ENCODE measurements at regions of chr15 and their contacts with region 1.

Region 1: DNA sequence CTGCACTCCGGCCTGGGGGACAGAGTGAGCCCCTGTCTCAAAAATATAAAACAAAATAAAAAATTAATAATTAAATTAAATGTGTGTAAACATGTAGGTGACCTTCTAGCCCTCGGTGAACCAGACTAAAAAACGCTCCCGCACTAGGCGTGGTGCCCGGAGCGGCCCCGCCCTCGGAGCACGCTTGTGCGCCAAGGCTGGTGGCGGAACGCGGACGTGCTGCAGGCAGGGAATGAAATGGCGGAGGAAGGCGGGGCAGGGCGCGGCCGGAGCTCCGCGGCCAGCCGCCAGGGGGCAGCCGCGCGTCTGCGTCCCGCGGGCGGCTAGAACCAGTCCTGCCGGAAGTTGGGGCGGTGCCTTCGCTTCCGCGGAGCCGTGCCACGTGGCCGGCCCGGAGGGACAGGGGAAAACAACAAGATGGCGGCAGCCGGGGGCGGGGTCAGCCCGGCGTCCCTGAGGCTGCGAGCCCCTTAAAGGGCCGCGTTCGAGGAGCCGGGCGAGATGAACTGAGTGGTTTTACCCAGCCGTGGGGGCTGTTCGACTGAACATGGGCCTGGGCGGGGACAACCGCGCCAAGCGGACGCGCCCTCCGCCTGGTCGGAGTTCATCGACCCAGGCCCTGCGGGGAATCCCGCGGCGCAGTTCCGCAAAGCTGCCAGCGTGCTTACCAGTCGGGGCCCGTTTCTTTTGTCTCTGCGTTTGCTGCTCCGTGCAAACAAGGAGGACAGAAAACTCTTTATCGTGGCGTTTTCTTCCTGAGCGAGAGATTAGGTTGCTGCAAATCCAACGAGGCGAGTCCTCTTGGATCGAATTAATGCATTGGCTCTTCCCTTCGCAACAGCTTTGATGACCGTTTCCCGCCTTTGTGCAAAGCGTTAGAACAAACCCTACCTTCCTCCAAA is 90.9 kb upstream of the CHD2 start:
- DNase-seq: peak; percentile 85
- H3K4me3 ChIP-seq: peak overlapping the region; percentile 47
- H3K27me3 ChIP-seq: no peaks in the 10 kb centered on the region
- CTCF ChIP-seq: peak; percentile 47

Region 2: DNA sequence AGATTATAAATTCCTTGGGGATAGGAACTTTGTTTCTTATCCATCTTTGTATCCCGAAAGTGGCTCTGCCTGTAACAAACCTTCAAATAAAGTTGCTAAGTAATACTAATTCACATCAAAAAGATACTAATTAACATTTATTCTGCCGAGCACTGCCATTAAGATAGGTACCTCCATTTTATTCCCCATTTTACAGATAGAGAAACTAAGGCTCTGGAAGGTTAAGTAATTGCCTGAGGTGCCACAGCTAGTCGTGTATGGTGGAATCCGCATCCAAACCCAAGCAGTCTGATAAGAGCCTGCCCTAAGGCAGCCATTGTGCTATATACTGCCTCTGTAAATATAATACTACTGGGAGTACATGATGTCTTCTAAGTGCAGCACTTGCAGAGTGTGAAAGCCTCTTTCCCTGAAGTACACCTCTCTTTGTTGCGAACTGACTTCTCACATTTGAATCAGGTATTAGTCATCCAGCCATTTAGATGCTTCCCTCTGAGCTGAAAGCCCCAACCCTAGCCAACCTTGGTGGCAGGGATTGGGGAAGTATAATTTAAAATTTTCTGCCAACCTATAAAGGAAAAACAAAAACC is 12.4 kb after region 1 on chr15:
- CTCF ChIA-PET with region 1: interaction called, 12 read pairs
- POLR2A ChIA-PET with region 1: no interaction called
- DNase-seq: no peak
- H3K4me3 ChIP-seq: no peak overlapping the region
- H3K27me3 ChIP-seq: no peaks in the 10 kb centered on the region
- CTCF ChIP-seq: no peak

Region 3: GRCh38 chr15:92881802-92882696 is 72.8 kb after region 1 on chr15:
- CTCF ChIA-PET with region 1: interaction called, 26 read pairs
- POLR2A ChIA-PET with region 1: interaction called, 23 read pairs
- DNase-seq: peak; percentile 99
- H3K4me3 ChIP-seq: peak overlapping the region; percentile 28
- H3K27me3 ChIP-seq: no peaks in the 10 kb centered on the region
- CTCF ChIP-seq: no peak

Region 4: GRCh38 chr15:92903941-92904831 is 95.0 kb after region 1 on chr15:
- CTCF ChIA-PET with region 1: interaction called, 13 read pairs
- POLR2A ChIA-PET with region 1: interaction called, 11 read pairs
- DNase-seq: peak; percentile 90
- H3K4me3 ChIP-seq: peak overlapping the region; percentile 43
- H3K27me3 ChIP-seq: no peaks in the 10 kb centered on the region
- CTCF ChIP-seq: no peak

Region 5: DNA sequence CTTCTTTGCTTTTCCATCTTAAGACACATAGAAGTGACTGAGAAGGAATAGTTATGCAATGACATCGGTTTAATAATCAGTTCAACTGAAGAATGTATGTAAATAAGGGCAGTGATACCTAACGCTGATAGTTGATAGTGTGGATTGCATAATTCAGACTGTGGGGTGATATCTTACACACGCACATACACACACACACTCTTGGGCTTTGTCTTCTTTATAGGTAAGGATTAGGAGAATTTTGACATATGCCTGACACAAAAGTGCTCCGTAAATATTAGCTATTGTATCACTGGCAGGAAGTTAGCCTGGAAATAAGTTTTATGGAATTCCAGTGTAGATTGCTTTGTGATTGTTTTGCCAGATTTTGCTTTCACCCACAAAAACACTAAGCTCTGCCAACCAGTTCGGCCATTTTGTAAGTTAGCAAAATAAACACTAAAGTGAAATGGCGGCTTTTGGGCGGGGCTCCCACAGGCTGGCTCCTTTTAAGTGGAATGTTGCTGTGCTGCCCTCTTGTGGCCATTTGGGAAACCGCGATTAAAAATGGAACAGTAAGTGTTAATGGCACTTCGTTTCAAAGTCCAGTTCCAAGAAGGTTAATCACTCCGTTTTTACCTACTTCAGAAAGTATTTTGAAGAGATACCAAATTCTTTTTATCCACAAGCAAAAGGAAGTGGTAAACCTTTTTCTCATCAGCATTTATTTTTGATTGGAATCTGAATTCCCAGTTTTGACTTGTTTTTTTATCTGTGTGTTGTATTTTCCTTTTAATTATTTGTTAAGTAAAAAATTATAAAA is 108.6 kb after region 1 on chr15:
- CTCF ChIA-PET with region 1: interaction called, 59 read pairs
- POLR2A ChIA-PET with region 1: no interaction called
- DNase-seq: peak; percentile 60
- H3K4me3 ChIP-seq: no peak overlapping the region
- H3K27me3 ChIP-seq: no peaks in the 10 kb centered on the region
- CTCF ChIP-seq: peak; percentile 83